CD4-positive, alpha-beta T cell (primary cell): ENCODE measurements at regions of chr12 and their contacts with region 1.

Region 1: GRCh38 chr12:98424726-98425401 is 90.5 kb upstream of the TMPO start:
- DNase-seq: peak; percentile 19 to 69 (median 40)
- ATAC-seq: peak; percentile 65
- H3K4me3 ChIP-seq: no peak overlapping the region
- H3K4me3 Mint-ChIP-seq: no peak overlapping the region
- H3K27ac ChIP-seq: no peak overlapping the region
- H3K27ac Mint-ChIP-seq: no peak overlapping the region
- H3K4me1 ChIP-seq: no peaks in the 10 kb centered on the region
- H3K4me1 Mint-ChIP-seq: no peaks in the 10 kb centered on the region
- H3K27me3 ChIP-seq: no peaks in the 10 kb centered on the region
- H3K27me3 Mint-ChIP-seq: no peaks in the 10 kb centered on the region
- CTCF ChIP-seq: peak; percentile 64

Region 2: DNA sequence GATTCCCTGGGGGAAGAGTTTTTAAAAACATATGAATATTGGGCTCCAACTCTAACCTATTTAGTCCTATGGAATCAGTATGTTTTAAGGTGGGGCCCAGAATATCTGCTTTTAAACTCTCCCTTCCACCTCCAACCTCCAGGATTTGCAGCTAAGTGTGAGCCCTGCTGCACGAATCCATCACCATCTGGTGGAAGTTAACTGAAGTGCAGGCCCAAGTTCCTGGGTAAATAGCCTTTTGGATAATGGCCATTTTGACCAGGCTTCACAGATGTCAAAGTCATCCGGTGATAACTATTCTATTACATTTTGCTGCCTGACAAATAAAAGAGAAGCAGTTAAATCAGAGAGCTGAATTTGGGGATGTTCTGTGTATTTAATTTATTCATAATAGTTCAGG is 1020.3 kb before region 1 on chr12:
- CTCF ChIA-PET with region 1: no interaction called
- POLR2A ChIA-PET with region 1: no interaction called
- intact Hi-C with region 1: no loop called
- DNase-seq: peak in 2 of 14 experiments; percentile 11 to 13
- ATAC-seq: no peak
- H3K4me3 ChIP-seq: no peak overlapping the region
- H3K4me3 Mint-ChIP-seq: no peak overlapping the region
- H3K27ac ChIP-seq: no peak overlapping the region
- H3K27ac Mint-ChIP-seq: no peak overlapping the region
- H3K4me1 ChIP-seq: no peaks in the 10 kb centered on the region
- H3K4me1 Mint-ChIP-seq: no peaks in the 10 kb centered on the region
- H3K27me3 ChIP-seq: no peaks in the 10 kb centered on the region
- H3K27me3 Mint-ChIP-seq: no peaks in the 10 kb centered on the region
- CTCF ChIP-seq: no peak

Region 3: GRCh38 chr12:97940629-97941028 is 484.2 kb before region 1 on chr12:
- CTCF ChIA-PET with region 1: no interaction called
- POLR2A ChIA-PET with region 1: no interaction called
- intact Hi-C with region 1: no loop called
- DNase-seq: no peak
- ATAC-seq: no peak
- H3K4me3 ChIP-seq: no peak overlapping the region
- H3K4me3 Mint-ChIP-seq: no peak overlapping the region
- H3K27ac ChIP-seq: no peak overlapping the region
- H3K27ac Mint-ChIP-seq: no peak overlapping the region
- H3K4me1 ChIP-seq: no peaks in the 10 kb centered on the region
- H3K4me1 Mint-ChIP-seq: no peaks in the 10 kb centered on the region
- H3K27me3 ChIP-seq: no peaks in the 10 kb centered on the region
- H3K27me3 Mint-ChIP-seq: no peaks in the 10 kb centered on the region
- CTCF ChIP-seq: no peak

Region 4: DNA sequence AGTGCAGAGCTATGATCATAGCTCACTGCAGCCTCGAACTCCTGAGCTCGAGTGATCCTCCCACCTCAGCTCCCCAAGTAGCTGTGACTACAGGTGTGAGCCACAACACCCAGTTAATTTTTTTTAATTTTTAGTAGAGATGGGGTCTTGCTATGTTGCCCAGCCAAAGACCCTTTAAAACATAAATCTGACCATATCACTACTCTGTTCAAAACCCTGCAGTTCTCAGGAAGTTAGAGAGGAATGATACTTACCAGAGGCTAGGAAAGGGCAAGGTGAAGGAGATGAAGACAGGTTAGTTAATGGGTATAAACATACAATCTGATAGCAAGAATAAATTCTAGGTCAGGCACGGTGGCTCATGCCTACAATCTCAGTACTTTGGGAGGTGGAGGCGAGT is 73.8 kb after region 1 on chr12:
- CTCF ChIA-PET with region 1: no interaction called
- POLR2A ChIA-PET with region 1: no interaction called
- intact Hi-C with region 1: no loop called
- DNase-seq: no peak
- ATAC-seq: no peak
- H3K4me3 ChIP-seq: no peak overlapping the region
- H3K4me3 Mint-ChIP-seq: no peak overlapping the region
- H3K27ac ChIP-seq: no peak overlapping the region
- H3K27ac Mint-ChIP-seq: no peak overlapping the region
- H3K4me1 ChIP-seq: peaks cover 16% of the 10 kb centered on the region
- H3K4me1 Mint-ChIP-seq: peaks cover 10% of the 10 kb centered on the region
- H3K27me3 ChIP-seq: no peaks in the 10 kb centered on the region
- H3K27me3 Mint-ChIP-seq: peaks cover 9% of the 10 kb centered on the region
- CTCF ChIP-seq: no peak

Region 5: DNA sequence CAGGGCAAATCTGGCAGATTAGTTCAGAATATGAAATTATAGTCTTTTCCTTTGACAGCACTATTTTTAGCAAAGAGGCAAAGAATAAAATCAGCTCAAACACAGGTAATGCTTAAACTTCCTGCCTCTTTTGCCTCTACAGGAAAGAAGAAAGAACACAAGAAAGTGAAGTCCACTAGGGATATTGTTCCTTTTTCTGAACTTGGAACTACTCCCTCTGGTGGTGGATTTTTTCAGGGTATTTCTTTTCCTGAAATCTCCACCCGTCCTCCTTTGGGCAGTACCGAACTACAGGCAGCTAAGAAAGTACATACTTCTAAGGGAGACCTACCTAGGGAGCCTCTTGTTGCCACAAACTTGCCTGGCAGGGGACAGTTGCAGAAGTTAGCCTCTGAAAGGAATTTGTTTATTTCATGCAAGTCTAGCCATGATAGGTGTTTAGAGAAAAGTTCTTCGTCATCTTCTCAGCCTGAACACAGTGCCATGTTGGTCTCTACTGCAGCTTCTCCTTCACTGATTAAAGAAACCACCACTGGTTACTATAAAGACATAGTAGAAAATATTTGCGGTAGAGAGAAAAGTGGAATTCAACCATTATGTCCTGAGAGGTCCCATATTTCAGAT is 107.9 kb after region 1 on chr12:
- CTCF ChIA-PET with region 1: no interaction called
- POLR2A ChIA-PET with region 1: no interaction called
- intact Hi-C with region 1: loop called in 1 of 2 experiments (anchors 5 kb)
- DNase-seq: peak in 3 of 14 experiments; percentile 60 to 72 (median 70)
- ATAC-seq: peak; percentile 60
- H3K4me3 ChIP-seq: no peak overlapping the region
- H3K4me3 Mint-ChIP-seq: no peak overlapping the region
- H3K27ac ChIP-seq: no peak overlapping the region
- H3K27ac Mint-ChIP-seq: peak overlapping the region; percentile 15
- H3K4me1 ChIP-seq: no peaks in the 10 kb centered on the region
- H3K4me1 Mint-ChIP-seq: peaks cover 22% of the 10 kb centered on the region
- H3K27me3 ChIP-seq: no peaks in the 10 kb centered on the region
- H3K27me3 Mint-ChIP-seq: no peaks in the 10 kb centered on the region
- CTCF ChIP-seq: peak; percentile 75

Region 6: DNA sequence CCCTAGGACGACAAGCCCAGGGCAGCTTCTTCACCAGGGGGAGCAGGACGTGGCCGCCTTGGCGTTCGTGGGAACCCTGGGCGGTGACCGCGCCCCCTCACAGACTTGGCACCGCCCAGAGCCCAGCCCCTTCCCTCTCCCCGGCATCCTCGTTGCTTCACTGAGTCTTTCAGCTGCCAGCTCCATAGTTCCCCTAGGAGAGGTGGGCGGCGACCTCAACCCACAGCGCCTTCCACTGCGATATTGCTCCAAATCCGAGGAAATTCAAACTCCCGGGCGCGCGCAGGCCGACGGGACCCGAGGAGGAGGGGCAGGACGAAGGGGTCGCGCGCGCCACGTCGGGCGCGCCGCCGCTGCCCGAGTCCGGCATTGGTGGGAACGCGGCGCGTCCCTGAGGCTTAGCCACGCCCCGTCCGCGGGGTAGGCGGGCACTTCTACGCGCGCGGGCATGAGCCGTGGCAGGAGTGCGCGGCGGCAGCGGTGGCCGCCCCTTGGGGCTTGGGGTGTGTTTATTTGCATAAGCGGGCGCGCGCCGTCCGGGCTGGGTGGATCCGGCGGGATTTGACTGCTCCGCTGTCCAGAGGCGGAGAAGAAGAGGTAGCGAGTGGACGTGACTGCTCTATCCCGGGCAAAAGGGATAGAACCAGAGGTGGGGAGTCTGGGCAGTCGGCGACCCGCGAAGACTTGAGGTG is 220.0 kb after region 1 on chr12 and contains the starts of genes APAF1 and IKBIP:
- CTCF ChIA-PET with region 1: no interaction called
- POLR2A ChIA-PET with region 1: no interaction called
- intact Hi-C with region 1: no loop called
- DNase-seq: peak; percentile 91 to 98 (median 97)
- ATAC-seq: peak; percentile 91
- H3K4me3 ChIP-seq: peak within 1 kb of the TSS; percentile 89
- H3K4me3 Mint-ChIP-seq: peak within 1 kb of the TSS; percentile 99
- H3K27ac ChIP-seq: peak within 1 kb of the TSS; percentile 55 to 71
- H3K27ac Mint-ChIP-seq: peak within 1 kb of the TSS; percentile 91
- H3K4me1 ChIP-seq: peaks cover 22% of the 10 kb centered on the region
- H3K4me1 Mint-ChIP-seq: peaks cover 32% of the 10 kb centered on the region
- H3K27me3 ChIP-seq: no peaks in the 10 kb centered on the region
- H3K27me3 Mint-ChIP-seq: no peaks in the 10 kb centered on the region
- CTCF ChIP-seq: no peak
- total RNA-seq, gene APAF1: 13.5 to 14.5 TPM
- total RNA-seq, gene IKBIP: 0.56 to 0.82 TPM